ENCODE measurements at regions of chr2 and their contacts with region 1.

Region 1: DNA sequence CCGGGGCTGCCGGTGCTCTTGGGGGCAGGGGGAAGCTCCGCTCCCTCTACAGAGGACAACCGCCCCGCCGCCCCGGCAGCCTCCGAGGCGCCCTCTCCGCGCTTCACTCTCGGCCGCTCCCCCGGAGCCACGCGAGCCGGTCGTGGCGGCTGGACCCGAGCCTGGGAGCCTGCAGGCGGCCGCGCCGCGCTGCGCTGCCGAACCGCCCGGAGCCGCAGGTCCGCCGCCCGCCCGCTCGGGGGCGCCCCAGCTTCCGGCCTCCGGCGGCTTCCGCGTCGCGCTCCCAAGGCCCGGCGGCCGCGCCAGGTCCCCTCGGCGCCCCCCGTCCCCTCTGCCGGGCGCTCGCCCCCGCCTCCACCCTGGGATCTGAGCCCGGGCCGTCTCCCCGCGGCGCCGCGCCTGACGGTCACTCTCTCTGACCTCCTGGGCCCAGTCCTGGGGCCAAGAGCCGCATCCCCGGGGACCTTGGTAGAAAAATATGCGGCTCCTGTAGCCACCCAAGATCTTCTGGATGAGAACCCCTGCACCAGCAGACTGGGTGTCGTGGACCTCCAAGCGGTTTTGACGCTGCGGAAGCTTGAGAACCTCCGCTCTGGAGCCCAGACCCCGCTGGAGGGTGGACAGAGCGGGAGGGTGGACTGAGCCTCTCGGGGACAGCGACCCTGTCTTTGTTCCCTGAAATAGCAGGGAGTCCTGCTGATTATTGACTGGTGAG is 44.3 kb downstream of the SERTAD2 start:
- H3K4me3 Mint-ChIP-seq: peak overlapping the region; percentile 85
- H3K27ac Mint-ChIP-seq: peak overlapping the region; percentile 95
- H3K4me1 Mint-ChIP-seq: peaks cover 28% of the 10 kb centered on the region
- H3K27me3 Mint-ChIP-seq: peaks cover 8% of the 10 kb centered on the region

Region 2: GRCh38 chr2:64644177-64645004 is 35.0 kb after region 1 on chr2:
- intact Hi-C with region 1: loop called (anchors 2 kb)
- H3K4me3 Mint-ChIP-seq: peak overlapping the region; percentile 91
- H3K27ac Mint-ChIP-seq: peak overlapping the region; percentile 98
- H3K4me1 Mint-ChIP-seq: peaks cover 64% of the 10 kb centered on the region
- H3K27me3 Mint-ChIP-seq: no peaks in the 10 kb centered on the region

Measured in dendritic cell treated with granulocyte-macrophage colony-stimulating factor and Interleukin-4, amounts not matched to agents 40 ng/mL and 50 ng/mL, for 4 days (primary cell).